CD4-positive, alpha-beta T cell (primary cell): ENCODE measurements at regions of chr15 and their contacts with region 1.

Region 1: DNA sequence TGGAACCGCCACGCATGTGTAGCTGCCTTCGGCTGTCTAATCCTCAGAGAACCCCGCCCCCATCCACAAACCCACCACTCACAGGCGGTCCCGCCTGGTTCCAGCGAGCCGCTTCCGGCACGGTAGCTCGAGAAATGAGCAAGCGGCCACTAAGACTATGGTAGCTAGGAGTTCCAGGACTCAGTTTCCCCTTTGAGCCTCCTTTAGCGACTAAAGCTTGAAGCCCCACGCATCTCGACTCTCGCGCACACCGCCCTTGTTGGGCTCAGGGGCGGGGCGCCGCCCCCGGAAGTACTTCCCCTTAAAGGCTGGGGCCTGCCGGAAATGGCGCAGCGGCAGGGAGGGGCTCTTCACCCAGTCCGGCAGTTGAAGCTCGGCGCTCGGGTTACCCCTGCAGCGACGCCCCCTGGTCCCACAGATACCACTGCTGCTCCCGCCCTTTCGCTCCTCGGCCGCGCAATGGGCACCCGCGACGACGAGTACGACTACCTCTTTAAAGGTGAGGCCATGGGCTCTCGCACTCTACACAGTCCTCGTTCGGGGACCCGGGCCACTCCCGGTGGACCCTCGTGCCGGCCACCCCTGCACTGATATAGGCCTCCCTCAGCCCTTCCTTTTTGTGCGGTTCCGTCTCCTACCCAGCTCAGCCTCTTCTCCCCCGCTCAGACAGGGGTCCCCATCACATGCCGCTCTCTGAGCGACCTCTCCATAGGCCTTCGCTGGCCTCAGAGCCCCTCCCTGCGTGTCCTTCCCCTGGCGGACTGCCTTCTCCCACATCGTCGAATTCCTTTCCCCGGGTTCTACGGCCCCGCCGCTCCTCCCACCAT is at the start of gene RAB11A:
- DNase-seq: peak; percentile 87 to 98 (median 93)
- ATAC-seq: peak; percentile 85
- H3K4me3 ChIP-seq: peak within 1 kb of the TSS; percentile 98
- H3K4me3 Mint-ChIP-seq: peak within 1 kb of the TSS; percentile 99
- H3K27ac ChIP-seq: peak within 1 kb of the TSS; percentile 80 to 96
- H3K27ac Mint-ChIP-seq: peak within 1 kb of the TSS; percentile 100
- H3K4me1 ChIP-seq: peaks cover 21% of the 10 kb centered on the region
- H3K4me1 Mint-ChIP-seq: peaks cover 49% of the 10 kb centered on the region
- H3K27me3 ChIP-seq: no peaks in the 10 kb centered on the region
- H3K27me3 Mint-ChIP-seq: peaks cover 3% of the 10 kb centered on the region
- CTCF ChIP-seq: peak; percentile 48
- total RNA-seq, gene RAB11A: 98.5 to 102 TPM

Region 2: GRCh38 chr15:65184868-65185738 is 684.2 kb before region 1 on chr15 and contains the start of gene CLPX:
- CTCF ChIA-PET with region 1: no interaction called
- POLR2A ChIA-PET with region 1: interaction called, 3 read pairs
- intact Hi-C with region 1: loop called in 1 of 2 experiments (anchors 10 kb)
- DNase-seq: peak; percentile 84 to 99 (median 90)
- ATAC-seq: peak; percentile 97
- H3K4me3 ChIP-seq: peak within 1 kb of the TSS; percentile 91
- H3K4me3 Mint-ChIP-seq: peak within 1 kb of the TSS; percentile 94
- H3K27ac ChIP-seq: peak within 1 kb of the TSS; percentile 82 to 86
- H3K27ac Mint-ChIP-seq: peak within 1 kb of the TSS; percentile 85
- H3K4me1 ChIP-seq: peaks cover 29% of the 10 kb centered on the region
- H3K4me1 Mint-ChIP-seq: peaks cover 33% of the 10 kb centered on the region
- H3K27me3 ChIP-seq: no peaks in the 10 kb centered on the region
- H3K27me3 Mint-ChIP-seq: no peaks in the 10 kb centered on the region
- CTCF ChIP-seq: no peak
- total RNA-seq, gene CLPX: 29.1 to 36.3 TPM

Region 3: DNA sequence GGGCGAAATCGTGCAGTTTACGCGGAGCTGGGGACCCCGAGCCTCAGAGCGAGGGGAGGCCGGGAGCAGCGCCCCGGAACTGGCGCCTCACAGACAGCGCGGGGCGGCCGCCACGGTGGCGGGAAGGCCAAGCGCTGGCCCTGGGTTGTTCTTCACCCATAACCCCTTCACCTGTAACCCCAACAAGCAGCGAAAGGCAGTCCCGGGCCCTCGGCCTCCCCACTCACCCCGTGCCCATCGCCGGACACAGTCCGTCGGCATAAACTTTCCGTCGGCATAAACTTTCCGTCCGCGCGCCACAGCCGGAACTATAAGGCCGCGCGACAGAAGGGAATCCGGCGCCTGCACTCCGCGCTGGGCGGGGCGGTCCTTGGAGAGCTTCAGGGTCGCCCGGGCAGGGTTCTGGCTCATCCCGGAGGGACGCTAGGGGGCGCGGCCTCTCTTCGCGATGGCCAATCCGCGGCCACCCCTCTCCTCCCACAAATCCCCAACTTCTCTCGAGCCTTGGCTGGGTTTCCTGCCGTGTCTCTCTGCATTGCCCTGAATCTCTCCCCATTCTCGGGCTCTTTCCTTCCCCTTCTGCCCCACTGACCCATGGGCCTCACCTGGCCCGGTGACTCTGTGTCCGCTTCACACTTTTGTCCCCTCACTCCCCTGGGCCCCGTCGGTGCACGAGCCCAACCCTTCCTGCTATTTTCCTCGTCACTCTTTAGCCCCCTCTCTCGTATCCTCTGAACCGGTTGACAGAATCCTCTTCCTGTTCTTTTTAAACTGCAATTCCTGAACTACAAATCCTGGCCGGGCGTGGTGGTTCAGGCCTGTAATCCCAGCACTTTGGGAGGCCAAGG is 258.2 kb before region 1 on chr15 and contains the start of gene INTS14:
- CTCF ChIA-PET with region 1: interaction called, 7 read pairs
- POLR2A ChIA-PET with region 1: interaction called, 14 read pairs
- intact Hi-C with region 1: loop called in 1 of 2 experiments (anchors 1 kb)
- DNase-seq: peak; percentile 81 to 96 (median 89)
- ATAC-seq: peak; percentile 94
- H3K4me3 ChIP-seq: peak within 1 kb of the TSS; percentile 77
- H3K4me3 Mint-ChIP-seq: peak within 1 kb of the TSS; percentile 99
- H3K27ac ChIP-seq: peak within 1 kb of the TSS; percentile 88 to 92
- H3K27ac Mint-ChIP-seq: peak within 1 kb of the TSS; percentile 93
- H3K4me1 ChIP-seq: peaks cover 28% of the 10 kb centered on the region
- H3K4me1 Mint-ChIP-seq: peaks cover 41% of the 10 kb centered on the region
- H3K27me3 ChIP-seq: no peaks in the 10 kb centered on the region
- H3K27me3 Mint-ChIP-seq: no peaks in the 10 kb centered on the region
- CTCF ChIP-seq: peak; percentile 59
- total RNA-seq, gene INTS14: 20.6 to 25.1 TPM

Region 4: GRCh38 chr15:65818927-65819562 is 50.3 kb before region 1 on chr15:
- CTCF ChIA-PET with region 1: interaction called, 5 read pairs
- POLR2A ChIA-PET with region 1: interaction called, 13 read pairs
- intact Hi-C with region 1: no loop called
- DNase-seq: peak in 3 of 14 experiments; percentile 89 to 95 (median 92)
- ATAC-seq: peak; percentile 90
- H3K4me3 ChIP-seq: no peak overlapping the region
- H3K4me3 Mint-ChIP-seq: peak overlapping the region; percentile 59
- H3K27ac ChIP-seq: peak overlapping the region; percentile 82 to 94
- H3K27ac Mint-ChIP-seq: peak overlapping the region; percentile 94
- H3K4me1 ChIP-seq: peaks cover 51% of the 10 kb centered on the region
- H3K4me1 Mint-ChIP-seq: peaks cover 60% of the 10 kb centered on the region
- H3K27me3 ChIP-seq: no peaks in the 10 kb centered on the region
- H3K27me3 Mint-ChIP-seq: no peaks in the 10 kb centered on the region
- CTCF ChIP-seq: no peak

Region 5: GRCh38 chr15:65881766-65882434 is 12.6 kb after region 1 on chr15:
- CTCF ChIA-PET with region 1: interaction called, 8 read pairs
- POLR2A ChIA-PET with region 1: interaction called, 71 read pairs
- intact Hi-C with region 1: loop called in 1 of 2 experiments (anchors 2 kb)
- DNase-seq: peak in 2 of 14 experiments; percentile 23 to 29
- ATAC-seq: peak; percentile 32
- H3K4me3 ChIP-seq: no peak overlapping the region
- H3K4me3 Mint-ChIP-seq: peak overlapping the region; percentile 27
- H3K27ac ChIP-seq: no peak overlapping the region
- H3K27ac Mint-ChIP-seq: peak overlapping the region; percentile 89
- H3K4me1 ChIP-seq: peaks cover 12% of the 10 kb centered on the region
- H3K4me1 Mint-ChIP-seq: peaks cover 66% of the 10 kb centered on the region
- H3K27me3 ChIP-seq: no peaks in the 10 kb centered on the region
- H3K27me3 Mint-ChIP-seq: no peaks in the 10 kb centered on the region
- CTCF ChIP-seq: no peak

Region 6: GRCh38 chr15:66504563-66505429 is 635.5 kb after region 1 on chr15 and contains the starts of genes RPL4 and ZWILCH:
- CTCF ChIA-PET with region 1: no interaction called
- POLR2A ChIA-PET with region 1: no interaction called
- intact Hi-C with region 1: loop called in 1 of 2 experiments (anchors 10 kb)
- DNase-seq: peak; percentile 69 to 91 (median 77)
- ATAC-seq: peak; percentile 85
- H3K4me3 ChIP-seq: peak within 1 kb of the TSS; percentile 95
- H3K4me3 Mint-ChIP-seq: peak within 1 kb of the TSS; percentile 100
- H3K27ac ChIP-seq: peak within 1 kb of the TSS; percentile 85 to 95
- H3K27ac Mint-ChIP-seq: peak within 1 kb of the TSS; percentile 93
- H3K4me1 ChIP-seq: peaks cover 24% of the 10 kb centered on the region
- H3K4me1 Mint-ChIP-seq: peaks cover 51% of the 10 kb centered on the region
- H3K27me3 ChIP-seq: no peaks in the 10 kb centered on the region
- H3K27me3 Mint-ChIP-seq: no peaks in the 10 kb centered on the region
- CTCF ChIP-seq: no peak
- total RNA-seq, gene RPL4: 4,558 to 4,627 TPM
- total RNA-seq, gene ZWILCH: 6.8 to 7.2 TPM